ENCODE measurements at regions of chr3 and their contacts with region 1.

Region 1: GRCh38 chr3:113626503-113627371 is 69.7 kb downstream of the USF3 start:
- DNase-seq: peak; percentile 61
- ATAC-seq: peak; percentile 85
- H3K4me3 ChIP-seq: 0 out of 6 replicates have a peak overlapping the region, but pooled peaks of 1 of the 3 experiments have one; percentile 9
- H3K27ac ChIP-seq: no peak overlapping the region
- H3K4me1 ChIP-seq: peaks cover 52% of the 10 kb centered on the region
- H3K27me3 ChIP-seq: 0 out of 5 replicates have a peak, but pooled peaks cover 0 to 9% of the 10 kb centered on the region in 2 experiments
- CTCF ChIP-seq: peak; percentile 86
- EP300 ChIP-seq: no peak
- POLR2A ChIP-seq: no peak
- RAD21 ChIP-seq: peak; percentile 82

Region 2: DNA sequence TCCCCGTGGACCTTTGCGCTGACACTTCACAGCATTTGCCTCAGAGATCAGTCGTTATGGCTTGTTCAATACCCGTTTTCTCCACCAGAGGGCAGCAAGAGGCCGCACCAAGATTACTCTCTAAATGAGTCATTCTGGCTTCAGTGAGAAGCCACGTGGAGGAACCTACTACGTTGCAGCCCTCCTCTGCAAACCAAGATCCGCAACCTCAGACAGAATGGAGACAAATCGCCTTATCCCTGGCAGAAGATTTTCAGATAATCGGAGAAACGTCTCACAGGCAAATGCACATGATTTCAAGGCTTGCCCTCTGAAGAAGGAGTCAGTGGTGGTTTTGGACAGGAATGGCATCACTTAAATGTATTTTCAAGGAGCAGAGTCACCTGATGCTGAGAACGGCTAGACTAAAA is 575.4 kb before region 1 on chr3:
- CTCF ChIA-PET with region 1: no interaction called
- POLR2A ChIA-PET with region 1: no interaction called
- in situ Hi-C with region 1: no loop called
- intact Hi-C with region 1: loop called (anchors 1 kb)
- DNase-seq: peak; percentile 56
- ATAC-seq: peak; percentile 94
- H3K4me3 ChIP-seq: no peak overlapping the region
- H3K27ac ChIP-seq: no peak overlapping the region
- H3K4me1 ChIP-seq: peaks cover 6% of the 10 kb centered on the region; the same call in 1 of the 2 replicates
- H3K27me3 ChIP-seq: no peaks in the 10 kb centered on the region
- CTCF ChIP-seq: peak; percentile 90
- EP300 ChIP-seq: no peak
- POLR2A ChIP-seq: no peak
- RAD21 ChIP-seq: peak; percentile 87

Region 3: DNA sequence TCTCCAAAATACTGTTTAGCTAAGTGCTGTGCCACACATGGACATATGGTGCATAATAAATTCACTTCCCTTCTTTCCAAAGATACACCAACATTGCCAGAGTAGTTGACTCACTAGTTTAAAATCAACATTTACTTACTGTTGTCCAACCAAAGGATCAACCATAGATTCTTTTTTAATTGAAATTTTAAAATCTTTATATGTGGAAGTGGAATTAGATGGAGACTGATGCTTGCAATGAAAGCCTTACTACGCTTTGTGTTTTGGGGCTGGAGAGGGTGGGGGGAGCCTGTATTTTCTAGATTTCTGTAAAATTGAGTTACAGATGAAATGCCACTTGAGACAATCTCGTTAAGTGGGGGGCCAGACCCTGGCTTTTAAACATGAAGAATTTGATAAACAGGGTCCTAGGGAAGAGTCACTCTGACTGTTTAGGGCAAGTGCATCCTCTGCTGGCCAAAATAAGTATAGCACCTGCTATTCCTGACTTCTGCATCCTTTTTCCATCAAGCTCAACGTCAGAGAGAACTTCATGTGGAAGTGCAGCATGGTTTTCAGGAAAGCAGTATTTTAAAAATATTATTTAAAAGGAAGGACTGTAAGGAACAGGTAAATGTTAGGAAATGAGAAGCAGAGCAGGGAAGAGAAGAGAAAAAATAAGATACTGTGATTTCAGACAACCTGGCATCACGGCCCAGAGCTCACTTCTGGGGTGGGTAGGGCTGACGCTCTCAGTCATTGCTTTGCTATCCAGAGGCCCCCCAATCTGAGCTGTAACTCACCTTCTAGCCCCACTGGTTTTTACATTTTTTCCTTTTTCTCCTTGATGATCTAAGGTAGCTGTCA is 338.7 kb before region 1 on chr3:
- CTCF ChIA-PET with region 1: no interaction called
- POLR2A ChIA-PET with region 1: no interaction called
- in situ Hi-C with region 1: no loop called
- intact Hi-C with region 1: loop called (anchors 1 kb)
- DNase-seq: peak; percentile 43
- ATAC-seq: peak; percentile 56
- H3K4me3 ChIP-seq: no peak overlapping the region
- H3K27ac ChIP-seq: no peak overlapping the region
- H3K4me1 ChIP-seq: peaks cover 18% of the 10 kb centered on the region
- H3K27me3 ChIP-seq: peaks cover 0 to 4% of the 10 kb centered on the region in 2 experiments; a peak in 2 of 5 replicates
- CTCF ChIP-seq: peak; percentile 87
- EP300 ChIP-seq: no peak
- POLR2A ChIP-seq: no peak
- RAD21 ChIP-seq: peak; percentile 80

Region 4: GRCh38 chr3:113454057-113454456 is 172.7 kb before region 1 on chr3:
- CTCF ChIA-PET with region 1: no interaction called
- POLR2A ChIA-PET with region 1: no interaction called
- in situ Hi-C with region 1: no loop called
- intact Hi-C with region 1: no loop called
- DNase-seq: no peak
- ATAC-seq: no peak
- H3K4me3 ChIP-seq: no peak overlapping the region
- H3K27ac ChIP-seq: no peak overlapping the region
- H3K4me1 ChIP-seq: no peaks in the 10 kb centered on the region
- H3K27me3 ChIP-seq: no peaks in the 10 kb centered on the region
- CTCF ChIP-seq: no peak
- EP300 ChIP-seq: no peak
- POLR2A ChIP-seq: no peak
- RAD21 ChIP-seq: no peak

Region 5: GRCh38 chr3:113575206-113575605 is 51.5 kb before region 1 on chr3:
- CTCF ChIA-PET with region 1: no interaction called
- POLR2A ChIA-PET with region 1: no interaction called
- in situ Hi-C with region 1: no loop called
- intact Hi-C with region 1: loop called (anchors 5 kb)
- DNase-seq: no peak
- ATAC-seq: peak; percentile 59; the same call in 2 of the 3 replicates
- H3K4me3 ChIP-seq: no peak overlapping the region
- H3K27ac ChIP-seq: no peak overlapping the region
- H3K4me1 ChIP-seq: peaks cover 32% of the 10 kb centered on the region
- H3K27me3 ChIP-seq: peaks cover 0 to 1% of the 10 kb centered on the region in 2 experiments; a peak in 2 of 5 replicates
- CTCF ChIP-seq: no peak
- EP300 ChIP-seq: no peak
- POLR2A ChIP-seq: no peak
- RAD21 ChIP-seq: no peak

Region 6: DNA sequence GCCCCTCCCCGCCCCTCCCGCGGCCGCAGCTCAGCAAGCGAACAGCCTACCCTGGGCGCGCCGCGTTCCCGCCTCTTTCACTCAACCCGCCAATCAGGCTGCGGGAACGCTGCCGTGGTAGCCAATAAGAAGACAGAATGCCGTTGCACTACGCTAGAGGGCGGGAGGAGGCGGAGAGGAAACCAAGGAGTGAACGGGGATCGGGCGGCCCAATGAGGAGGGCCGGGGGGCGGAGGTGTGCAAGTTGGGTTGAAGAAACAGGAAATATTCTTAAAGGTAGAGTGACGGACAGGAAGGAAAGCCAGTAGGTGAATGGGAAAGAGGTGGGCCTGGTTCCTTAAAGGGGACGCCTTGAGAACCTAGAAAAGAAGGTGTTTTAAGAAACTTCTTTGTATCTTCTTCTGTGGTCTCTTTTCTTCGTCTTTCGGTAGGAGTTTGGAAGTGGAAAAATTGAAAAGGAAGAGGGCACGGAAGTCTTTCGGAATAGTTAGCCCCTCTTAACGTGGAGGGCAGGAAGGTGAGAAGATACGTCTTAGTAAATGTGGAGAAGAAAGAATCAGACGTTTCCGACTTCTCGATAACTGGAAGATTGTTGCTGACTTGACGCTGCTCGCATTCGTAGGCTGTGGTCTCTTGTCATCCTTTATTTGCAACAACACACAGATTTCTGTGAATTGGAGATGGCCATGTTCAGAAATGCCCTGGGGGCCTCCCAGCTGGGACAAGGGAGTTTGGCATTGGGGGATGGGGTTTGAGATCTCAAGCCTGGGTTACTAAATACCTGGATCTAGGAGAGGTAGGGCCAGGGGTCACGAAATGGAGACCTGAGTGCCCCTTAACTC is 70.1 kb after region 1 on chr3:
- CTCF ChIA-PET with region 1: no interaction called
- POLR2A ChIA-PET with region 1: interaction called, 6 read pairs
- in situ Hi-C with region 1: no loop called
- intact Hi-C with region 1: loop called (anchors 5 kb)
- DNase-seq: peak; percentile 98
- ATAC-seq: peak; percentile 90
- H3K4me3 ChIP-seq: peak overlapping the region; percentile 77 to 92 (median 85)
- H3K27ac ChIP-seq: peak overlapping the region; percentile 73
- H3K4me1 ChIP-seq: peaks cover 52% of the 10 kb centered on the region
- H3K27me3 ChIP-seq: no peaks in the 10 kb centered on the region; a peak in 1 of 5 replicates
- CTCF ChIP-seq: peak; percentile 25
- EP300 ChIP-seq: no peak
- POLR2A ChIP-seq: no peak
- RAD21 ChIP-seq: no peak

Region 7: DNA sequence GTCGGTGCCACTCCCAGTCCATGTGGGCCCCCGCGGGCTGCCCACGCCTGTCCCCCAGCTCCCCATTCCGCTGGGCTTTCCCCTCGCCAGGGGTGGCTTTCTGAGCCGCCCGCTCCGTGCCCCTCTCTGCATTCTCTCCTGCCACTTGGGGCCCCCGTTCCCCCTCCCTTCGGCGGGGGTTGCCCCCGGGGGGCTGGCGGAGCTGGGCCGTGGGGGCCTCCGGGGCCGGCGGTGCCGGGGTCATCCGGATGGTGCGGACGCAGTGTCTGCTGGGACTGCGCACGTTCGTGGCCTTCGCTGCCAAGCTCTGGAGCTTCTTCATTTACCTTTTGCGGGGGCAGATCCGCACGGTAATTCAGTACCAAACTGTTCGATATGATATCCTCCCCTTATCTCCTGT is 258.3 kb after region 1 on chr3:
- CTCF ChIA-PET with region 1: no interaction called
- POLR2A ChIA-PET with region 1: no interaction called
- in situ Hi-C with region 1: no loop called
- intact Hi-C with region 1: no loop called
- DNase-seq: no peak
- ATAC-seq: no peak
- H3K4me3 ChIP-seq: no peak overlapping the region
- H3K27ac ChIP-seq: no peak overlapping the region
- H3K4me1 ChIP-seq: no peaks in the 10 kb centered on the region
- H3K27me3 ChIP-seq: no peaks in the 10 kb centered on the region
- CTCF ChIP-seq: no peak
- EP300 ChIP-seq: no peak
- POLR2A ChIP-seq: no peak
- RAD21 ChIP-seq: no peak